ENCODE measurements at regions of chr2 and their contacts with region 1.

Region 1: DNA sequence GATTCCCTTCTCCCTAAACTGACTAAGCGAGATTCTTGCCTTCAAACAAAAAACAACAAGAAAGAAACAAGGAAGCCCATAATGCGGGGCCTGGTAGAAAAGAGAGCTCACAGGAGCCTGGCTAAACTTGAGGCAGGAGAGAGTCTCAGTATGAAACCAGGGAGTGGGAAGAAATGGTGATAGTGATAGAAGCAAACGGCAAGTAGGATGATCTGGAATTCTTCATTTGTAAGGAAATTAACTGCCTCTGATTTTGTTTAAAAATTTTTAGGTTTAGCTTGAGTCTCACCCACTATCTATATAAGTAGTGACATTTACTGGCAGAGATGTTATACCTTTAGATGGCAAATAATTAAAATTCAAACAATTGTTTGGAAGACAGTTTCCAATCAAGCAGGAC is 1356.5 kb upstream of the LRRTM1 start:
- DNase-seq: no peak
- H3K4me3 ChIP-seq: no peak overlapping the region
- CTCF ChIP-seq: no peak

Region 2: GRCh38 chr2:81583311-81584108 is 77.6 kb before region 1 on chr2:
- in situ Hi-C with region 1: loop called (anchors 5 kb)
- DNase-seq: no peak
- H3K4me3 ChIP-seq: no peak overlapping the region
- CTCF ChIP-seq: no peak